ENCODE measurements at regions of chr16 and their contacts with region 1.

Region 1: DNA sequence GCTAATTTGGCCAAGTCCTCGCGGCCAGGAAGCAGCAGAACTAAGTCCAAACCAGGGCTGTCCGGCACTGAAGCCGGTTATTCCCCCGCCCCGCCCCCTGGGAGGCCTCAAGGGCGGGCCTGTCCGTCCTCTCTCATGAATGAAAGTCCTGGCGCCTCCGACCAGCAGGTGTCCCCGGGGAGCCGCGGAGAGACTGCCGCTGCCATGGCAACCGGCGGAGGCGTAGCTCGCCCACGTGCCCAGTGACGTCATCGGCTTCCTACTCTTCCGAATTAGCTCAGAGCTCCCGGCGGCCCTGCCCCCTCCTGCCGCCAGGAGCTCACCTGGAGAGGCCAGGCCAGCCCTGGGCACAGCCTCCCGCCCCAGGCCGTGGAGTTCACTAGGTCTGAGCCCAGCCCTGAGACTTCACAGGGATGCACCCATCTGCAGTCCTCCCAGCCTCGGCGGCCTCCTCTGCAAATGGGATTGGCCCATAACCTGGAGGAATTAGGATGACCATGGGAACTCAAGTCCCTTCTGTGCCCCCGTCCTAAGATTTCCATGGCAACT is 1.3 kb downstream of the SPATA2L start:
- DNase-seq: peak; percentile 100
- H3K4me3 ChIP-seq: peak overlapping the region; percentile 87
- H3K4me3 Mint-ChIP-seq: peak overlapping the region; percentile 83
- H3K27ac Mint-ChIP-seq: peak overlapping the region; percentile 77
- H3K4me1 ChIP-seq: peaks cover 4% of the 10 kb centered on the region; the same call in 1 of the 2 replicates
- H3K4me1 Mint-ChIP-seq: peaks cover 7% of the 10 kb centered on the region
- H3K27me3 ChIP-seq: no peaks in the 10 kb centered on the region
- H3K27me3 Mint-ChIP-seq: no peaks in the 10 kb centered on the region
- CTCF ChIP-seq: peak; percentile 88 to 89

Region 2: DNA sequence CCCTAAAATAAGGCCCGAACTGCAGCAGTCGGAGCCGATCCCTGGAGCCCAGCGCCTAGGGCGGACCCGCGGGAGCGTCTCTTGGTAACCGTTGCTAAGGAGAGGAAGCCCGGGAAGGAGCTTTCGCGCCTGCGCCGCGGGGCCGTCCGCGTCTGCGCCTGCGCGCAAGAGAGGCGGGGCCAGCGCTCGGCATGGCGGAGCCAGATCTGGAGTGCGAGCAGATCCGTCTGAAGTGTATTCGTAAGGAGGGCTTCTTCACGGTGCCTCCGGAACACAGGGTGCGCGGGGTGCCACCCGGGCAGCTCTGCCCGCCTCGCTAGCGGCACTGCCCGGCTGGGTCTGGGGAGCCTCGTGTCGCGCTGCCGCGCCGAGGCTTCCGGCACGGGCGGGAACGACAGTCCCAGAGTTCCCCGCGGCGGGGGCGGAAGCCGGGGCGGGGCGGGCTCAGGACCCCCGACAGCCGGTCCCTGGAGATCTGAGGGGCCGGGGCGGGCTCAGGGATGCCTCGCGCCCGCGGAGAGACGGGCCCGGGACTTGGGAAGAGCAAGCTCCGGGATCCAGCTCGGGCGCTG is 13.6 kb before region 1 on chr16 and contains the start of gene CDK10:
- CTCF ChIA-PET with region 1: interaction called, 11 read pairs
- POLR2A ChIA-PET with region 1: interaction called, 14 read pairs
- intact Hi-C with region 1: loop called (anchors 1 kb)
- DNase-seq: peak; percentile 93 to 98
- H3K4me3 ChIP-seq: peak within 1 kb of the TSS; percentile 93
- H3K4me3 Mint-ChIP-seq: peak within 1 kb of the TSS; percentile 71
- H3K27ac Mint-ChIP-seq: peak within 1 kb of the TSS; percentile 77
- H3K4me1 ChIP-seq: peaks cover 10% of the 10 kb centered on the region
- H3K4me1 Mint-ChIP-seq: peaks cover 6% of the 10 kb centered on the region
- H3K27me3 ChIP-seq: no peaks in the 10 kb centered on the region
- H3K27me3 Mint-ChIP-seq: no peaks in the 10 kb centered on the region
- CTCF ChIP-seq: no peak
- total RNA-seq, gene CDK10: 135 and 140 TPM in 2 replicates

Region 3: DNA sequence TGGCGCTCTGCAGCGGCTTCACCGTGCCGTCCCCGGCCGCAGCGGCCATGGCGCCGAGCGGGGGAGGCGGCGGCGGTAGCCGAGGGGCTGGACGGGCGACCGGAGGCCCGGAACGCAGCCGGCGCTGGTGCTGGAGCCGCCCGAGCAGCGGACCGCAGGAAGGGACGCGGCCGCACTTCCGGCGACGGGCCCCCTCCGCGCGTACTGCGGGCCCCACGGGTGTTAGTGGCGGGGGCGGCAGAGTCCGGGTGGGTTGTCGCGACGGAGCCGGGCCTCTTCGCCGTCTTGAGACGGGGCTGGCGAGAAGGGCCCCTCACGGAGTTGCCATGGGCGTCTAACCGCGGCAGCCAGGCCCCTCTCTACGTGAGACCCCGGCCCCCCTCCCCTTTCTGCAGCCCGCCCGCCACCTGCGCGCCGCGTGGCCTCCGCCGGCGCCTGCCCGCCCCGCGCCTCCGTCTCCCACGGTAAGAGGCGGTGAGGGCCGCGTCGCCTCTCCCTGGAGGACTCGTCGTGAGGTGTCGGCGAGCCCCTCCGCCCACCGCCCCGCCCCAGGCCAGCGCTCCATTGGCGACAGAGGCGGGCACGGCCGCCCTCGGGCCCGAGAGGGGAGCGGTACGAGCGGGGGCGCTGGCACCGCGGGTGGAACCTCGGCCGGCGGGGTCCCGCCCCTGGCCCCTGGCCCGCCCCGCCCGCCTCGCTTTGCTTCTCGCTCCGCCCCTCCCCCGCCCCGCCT is 20.8 kb after region 1 on chr16 and contains the starts of genes VPS9D1 and ZNF276:
- CTCF ChIA-PET with region 1: interaction called, 5 read pairs
- POLR2A ChIA-PET with region 1: interaction called, 4 read pairs
- intact Hi-C with region 1: loop called (anchors 1 kb)
- DNase-seq: peak; percentile 88 to 91
- H3K4me3 ChIP-seq: peak within 1 kb of the TSS; percentile 58
- H3K4me3 Mint-ChIP-seq: peak within 1 kb of the TSS; percentile 80
- H3K27ac Mint-ChIP-seq: peak within 1 kb of the TSS; percentile 83
- H3K4me1 ChIP-seq: peaks cover 25% of the 10 kb centered on the region
- H3K4me1 Mint-ChIP-seq: peaks cover 32% of the 10 kb centered on the region
- H3K27me3 ChIP-seq: no peaks in the 10 kb centered on the region
- H3K27me3 Mint-ChIP-seq: no peaks in the 10 kb centered on the region
- CTCF ChIP-seq: no peak
- total RNA-seq, gene VPS9D1: 6.1 and 6.3 TPM in 2 replicates
- total RNA-seq, gene ZNF276: 28.1 and 35.4 TPM in 2 replicates

Region 4: GRCh38 chr16:89805136-89805905 is 105.1 kb after region 1 on chr16:
- CTCF ChIA-PET with region 1: no interaction called
- POLR2A ChIA-PET with region 1: no interaction called
- intact Hi-C with region 1: no loop called
- DNase-seq: no peak
- H3K4me3 ChIP-seq: no peak overlapping the region
- H3K4me3 Mint-ChIP-seq: no peak overlapping the region
- H3K27ac Mint-ChIP-seq: no peak overlapping the region
- H3K4me1 ChIP-seq: no peaks in the 10 kb centered on the region
- H3K4me1 Mint-ChIP-seq: no peaks in the 10 kb centered on the region
- H3K27me3 ChIP-seq: no peaks in the 10 kb centered on the region
- H3K27me3 Mint-ChIP-seq: no peaks in the 10 kb centered on the region
- CTCF ChIP-seq: no peak

Region 5: GRCh38 chr16:89860747-89861304 is 160.7 kb after region 1 on chr16:
- CTCF ChIA-PET with region 1: interaction called, 24 read pairs
- POLR2A ChIA-PET with region 1: no interaction called
- intact Hi-C with region 1: loop called (anchors 1 kb)
- DNase-seq: peak; percentile 88 to 91
- H3K4me3 ChIP-seq: no peak overlapping the region
- H3K4me3 Mint-ChIP-seq: no peak overlapping the region
- H3K27ac Mint-ChIP-seq: peak overlapping the region; percentile 82
- H3K4me1 ChIP-seq: peaks cover 3% of the 10 kb centered on the region; the same call in 1 of the 2 replicates
- H3K4me1 Mint-ChIP-seq: peaks cover 21% of the 10 kb centered on the region
- H3K27me3 ChIP-seq: no peaks in the 10 kb centered on the region
- H3K27me3 Mint-ChIP-seq: no peaks in the 10 kb centered on the region
- CTCF ChIP-seq: peak; percentile 99

Measured in Caco-2 (cell line).